Activated naive CD4-positive, alpha-beta T cell treated with anti-CD3 and anti-CD28 coated beads, Interleukin-2, amount 10 ng/mL, durations not matched to agents 7 days and 5 days (primary cell): ENCODE measurements at regions of chr1 and their contacts with region 1.

Region 1: GRCh38 chr1:119885903-119886783 is 10.2 kb downstream of the ADAM30 start:
- DNase-seq: peak; percentile 77
- H3K4me3 Mint-ChIP-seq: no peak overlapping the region
- H3K27ac Mint-ChIP-seq: no peak overlapping the region
- H3K4me1 Mint-ChIP-seq: peaks cover 4% of the 10 kb centered on the region
- H3K27me3 Mint-ChIP-seq: peaks cover 23% of the 10 kb centered on the region

Region 2: GRCh38 chr1:119895986-119896702 is 10.0 kb after region 1 on chr1 and contains the start of gene ADAM30:
- CTCF ChIA-PET with region 1: interaction called, 13 read pairs
- DNase-seq: no peak
- H3K4me3 Mint-ChIP-seq: no peak within 1 kb of the TSS
- H3K27ac Mint-ChIP-seq: no peak within 1 kb of the TSS
- H3K4me1 Mint-ChIP-seq: peaks cover 42% of the 10 kb centered on the region
- H3K27me3 Mint-ChIP-seq: peaks cover 2% of the 10 kb centered on the region

Region 3: GRCh38 chr1:119926553-119926952 is 40.4 kb after region 1 on chr1:
- CTCF ChIA-PET with region 1: no interaction called
- DNase-seq: no peak
- H3K4me3 Mint-ChIP-seq: no peak overlapping the region
- H3K27ac Mint-ChIP-seq: no peak overlapping the region
- H3K4me1 Mint-ChIP-seq: peaks cover 4% of the 10 kb centered on the region
- H3K27me3 Mint-ChIP-seq: no peaks in the 10 kb centered on the region